ENCODE measurements at regions of chr21 and their contacts with region 1.

Region 1: DNA sequence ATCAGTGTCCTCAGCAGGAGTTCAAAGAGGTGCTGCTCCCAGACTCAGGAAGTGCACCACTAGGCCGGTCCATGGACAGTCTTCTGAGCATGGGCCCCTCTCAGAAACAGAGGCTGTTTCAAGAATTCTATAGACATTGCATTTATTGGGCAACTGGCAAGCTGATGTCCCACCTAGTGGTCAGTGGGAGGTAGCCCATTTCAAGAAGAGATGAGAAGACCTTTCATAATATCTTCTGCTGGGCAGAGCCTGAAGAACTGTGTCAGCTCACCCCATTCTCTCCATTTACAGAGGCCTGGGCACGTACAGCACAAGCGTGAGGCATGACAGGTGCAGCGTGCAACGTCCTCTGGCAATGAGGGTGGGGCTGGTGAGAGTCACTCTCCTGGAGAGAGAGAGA is 216.0 kb downstream of the DYRK1A start:
- DNase-seq: peak; percentile 77
- ATAC-seq: peak; percentile 98
- H3K4me3 ChIP-seq: no peak overlapping the region
- H3K27ac ChIP-seq: no peak overlapping the region
- H3K4me1 ChIP-seq: no peaks in the 10 kb centered on the region
- H3K27me3 ChIP-seq: peaks cover 2% of the 10 kb centered on the region; the same call in 1 of the 2 replicates
- CTCF ChIP-seq: peak; percentile 85
- POLR2A ChIP-seq: 0 out of 2 replicates have a peak, but pooled peaks have one; percentile 31
- RAD21 ChIP-seq: peak; percentile 94

Region 2: GRCh38 chr21:37220981-37221664 is 361.5 kb before region 1 on chr21:
- CTCF ChIA-PET with region 1: no interaction called
- POLR2A ChIA-PET with region 1: no interaction called
- dilution Hi-C with region 1: no loop called
- in situ Hi-C with region 1: no loop called
- intact Hi-C with region 1: loop called (anchors 1 kb)
- DNase-seq: peak; percentile 87
- ATAC-seq: peak; percentile 90
- H3K4me3 ChIP-seq: peak overlapping the region; percentile 59
- H3K27ac ChIP-seq: peak overlapping the region; percentile 41
- H3K4me1 ChIP-seq: peaks cover 2% of the 10 kb centered on the region
- H3K27me3 ChIP-seq: no peaks in the 10 kb centered on the region
- CTCF ChIP-seq: peak; percentile 45
- POLR2A ChIP-seq: peak; percentile 37; the same call in 1 of the 2 replicates
- RAD21 ChIP-seq: peak; percentile 61

Region 3: GRCh38 chr21:37251294-37251634 is 331.3 kb before region 1 on chr21:
- CTCF ChIA-PET with region 1: no interaction called
- POLR2A ChIA-PET with region 1: no interaction called
- dilution Hi-C with region 1: no loop called
- in situ Hi-C with region 1: no loop called
- intact Hi-C with region 1: loop called (anchors 2 kb)
- DNase-seq: no peak
- ATAC-seq: peak; percentile 52
- H3K4me3 ChIP-seq: no peak overlapping the region
- H3K27ac ChIP-seq: no peak overlapping the region; the same call in 1 of the 2 replicates
- H3K4me1 ChIP-seq: peaks cover 9% of the 10 kb centered on the region
- H3K27me3 ChIP-seq: no peaks in the 10 kb centered on the region
- CTCF ChIP-seq: no peak
- POLR2A ChIP-seq: no peak
- RAD21 ChIP-seq: no peak

Region 4: DNA sequence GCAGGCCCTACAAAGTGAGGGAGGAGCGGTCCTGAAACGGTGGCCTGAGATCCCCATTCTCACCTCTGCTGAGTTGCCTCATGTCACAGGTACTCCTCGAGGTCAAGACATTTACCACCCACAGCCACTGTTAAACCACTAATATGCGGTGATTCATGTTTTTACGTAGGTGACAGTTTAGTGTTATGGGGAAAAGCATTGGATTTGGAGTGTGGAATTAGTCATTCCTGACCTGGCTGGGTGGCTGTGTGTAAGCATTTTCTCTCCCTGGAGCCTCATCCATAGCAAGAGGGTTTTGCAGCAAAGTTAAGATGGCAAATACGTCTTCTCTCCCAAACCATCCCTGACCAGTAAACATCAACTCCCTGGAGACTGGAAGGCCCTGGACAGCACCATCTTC is 391.5 kb after region 1 on chr21:
- CTCF ChIA-PET with region 1: no interaction called
- POLR2A ChIA-PET with region 1: no interaction called
- dilution Hi-C with region 1: no loop called
- in situ Hi-C with region 1: no loop called
- intact Hi-C with region 1: no loop called
- DNase-seq: peak; percentile 1
- ATAC-seq: no peak
- H3K4me3 ChIP-seq: no peak overlapping the region
- H3K27ac ChIP-seq: no peak overlapping the region
- H3K4me1 ChIP-seq: no peaks in the 10 kb centered on the region
- H3K27me3 ChIP-seq: peaks cover 20% of the 10 kb centered on the region
- CTCF ChIP-seq: no peak
- POLR2A ChIP-seq: no peak
- RAD21 ChIP-seq: no peak